Dorsolateral prefrontal cortex (tissue), 120 donors: ENCODE measurements at regions of chr1 and their contacts with region 1.

Region 1: DNA sequence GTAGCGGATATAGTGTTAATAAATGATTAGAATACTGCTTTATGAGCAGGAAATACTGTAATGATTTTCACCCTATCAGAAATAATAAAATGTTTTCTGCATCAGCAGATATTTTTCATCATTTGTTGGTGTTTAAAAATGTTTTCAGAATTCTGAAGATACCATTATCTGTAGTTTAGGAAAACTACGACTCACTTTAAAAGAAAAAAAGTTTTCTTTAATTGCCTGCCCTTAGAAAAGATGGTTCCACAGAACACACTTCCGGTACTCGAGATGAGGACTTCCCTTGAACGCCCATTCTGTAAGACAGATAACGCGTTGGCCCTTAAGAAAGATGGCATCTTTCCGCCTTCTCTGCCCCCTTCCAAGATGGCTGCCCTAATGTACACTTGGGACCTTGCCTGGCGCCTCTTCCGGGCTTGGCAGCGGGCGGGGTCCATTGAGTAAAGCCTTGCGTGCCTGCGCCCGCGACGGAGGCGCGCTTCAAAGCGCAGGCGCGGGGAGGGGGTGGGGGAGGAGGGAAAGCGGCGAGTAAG is at the start of gene SZRD1:
- DNase-seq: peak; percentile 92 to 99 (median 96)
- H3K4me3 ChIP-seq: peak within 1 kb of the TSS; percentile 52 to 98 (median 90)
- H3K27ac ChIP-seq: peak within 1 kb of the TSS; percentile 80 to 100 (median 99)
- H3K27me3 ChIP-seq: no peaks in the 10 kb centered on the region
- CTCF ChIP-seq: peak in 4 of 56 donors; percentile 4 to 35 (median 9)
- total RNA-seq, gene SZRD1: 33.3 to 89.5 (median 49.3) TPM

Region 2: GRCh38 chr1:16078925-16079656 is 287.7 kb before region 1 on chr1:
- intact Hi-C with region 1: loop called (anchors 2 to 5 kb)
- DNase-seq: peak; percentile 67 to 85 (median 82)
- H3K4me3 ChIP-seq: peak overlapping the region in 7 of 59 donors; percentile 12 to 39 (median 31)
- H3K27ac ChIP-seq: peak overlapping the region in 6 of 59 donors; percentile 14 to 50 (median 36)
- H3K27me3 ChIP-seq: no peaks in the 10 kb centered on the region
- CTCF ChIP-seq: peak; percentile 70 to 97 (median 92)

Region 3: DNA sequence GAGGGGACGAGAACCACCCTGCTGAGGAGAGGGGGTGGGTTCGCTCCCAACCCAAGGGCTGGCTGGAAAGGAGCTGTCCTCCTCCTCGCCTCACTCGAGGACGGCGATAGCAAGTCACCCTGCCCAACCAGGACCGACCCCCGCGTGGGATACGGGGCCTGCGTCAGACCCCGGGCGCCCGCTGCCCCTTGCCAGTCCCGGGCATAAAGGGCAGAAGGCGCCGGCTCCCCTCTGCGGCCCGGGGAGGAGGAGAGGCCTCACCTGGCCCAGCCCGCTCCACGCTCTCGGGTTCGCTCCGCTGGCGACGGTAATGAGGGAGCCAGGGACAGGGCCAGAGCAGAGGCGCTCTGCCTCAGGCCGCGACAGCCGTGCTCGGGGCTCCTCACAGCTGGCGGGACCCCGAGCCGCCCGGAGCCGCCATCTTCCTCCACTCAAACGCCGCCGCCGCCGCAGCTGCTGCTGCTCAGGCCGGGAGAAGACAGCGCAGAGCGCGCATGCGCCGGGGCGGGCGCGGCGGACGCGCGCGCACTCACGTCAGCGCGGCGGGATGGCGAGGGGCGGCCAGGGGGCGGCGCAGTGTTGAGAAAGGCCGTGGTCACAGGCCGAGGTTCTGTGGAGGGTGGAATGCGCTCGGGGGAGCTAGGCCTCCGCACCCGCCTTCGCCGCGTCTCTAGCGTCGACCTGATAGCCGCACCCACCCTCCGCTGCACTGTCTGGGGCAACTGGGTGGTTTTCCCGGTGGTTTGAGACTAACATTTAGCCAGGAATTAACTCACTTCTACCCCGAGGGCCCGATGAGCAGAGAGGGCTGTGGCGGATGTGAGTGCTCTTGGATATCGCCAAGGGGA is 14.6 kb before region 1 on chr1 and contains the start of gene FBXO42:
- intact Hi-C with region 1: loop called (anchors 1 to 2 kb)
- DNase-seq: peak; percentile 73 to 94 (median 86)
- H3K4me3 ChIP-seq: peak within 1 kb of the TSS; percentile 62 to 100 (median 95)
- H3K27ac ChIP-seq: peak within 1 kb of the TSS; percentile 60 to 98 (median 91)
- H3K27me3 ChIP-seq: no peaks in the 10 kb centered on the region
- CTCF ChIP-seq: peak in 55 of 56 donors; percentile 24 to 80 (median 61)
- total RNA-seq, gene FBXO42: 19.4 to 43.5 (median 31.1) TPM

Region 4: DNA sequence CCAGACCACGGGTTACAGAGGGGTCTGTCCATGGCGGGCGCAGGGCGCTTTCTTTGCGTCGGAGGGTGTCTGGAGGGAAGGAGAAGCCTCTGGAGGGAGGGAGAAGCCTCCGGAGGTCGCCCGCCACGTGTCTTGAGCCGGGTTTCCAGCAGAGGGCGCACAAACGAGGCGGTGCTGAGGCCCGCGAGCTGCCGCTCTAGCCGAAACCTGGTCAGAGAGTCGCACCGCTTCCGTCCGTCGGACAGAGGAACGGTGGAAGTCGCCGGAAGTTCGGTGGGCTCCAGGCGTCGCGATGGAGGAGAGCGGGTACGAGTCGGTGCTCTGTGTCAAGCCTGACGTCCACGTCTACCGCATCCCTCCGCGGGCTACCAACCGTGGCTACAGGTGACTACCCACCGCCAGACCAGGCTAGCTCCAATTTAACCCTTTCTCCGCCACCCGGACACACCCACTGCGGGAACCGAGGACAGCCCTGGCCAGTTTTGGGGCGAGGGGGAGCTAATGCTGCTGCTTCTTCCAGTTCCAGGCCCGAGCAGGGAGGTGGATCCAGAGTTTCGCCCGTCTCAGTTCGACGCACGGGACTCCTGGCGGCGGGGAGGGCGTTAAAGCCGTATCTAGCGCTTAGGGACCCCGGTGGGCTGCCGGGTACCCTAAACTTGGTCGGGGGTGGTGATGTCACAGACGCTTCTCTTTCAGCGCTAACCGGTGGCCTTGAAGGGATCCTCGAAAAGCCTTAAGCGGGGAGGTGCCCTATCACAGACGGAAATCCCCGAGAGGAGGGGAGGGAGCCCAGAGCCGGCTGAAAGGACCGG is 73.9 kb after region 1 on chr1 and contains the start of gene NECAP2:
- intact Hi-C with region 1: loop called in 1 of 2 experiments (anchors 5 kb)
- DNase-seq: peak; percentile 85 to 96 (median 92)
- H3K4me3 ChIP-seq: peak within 1 kb of the TSS; percentile 66 to 99 (median 92)
- H3K27ac ChIP-seq: peak within 1 kb of the TSS; percentile 38 to 97 (median 80)
- H3K27me3 ChIP-seq: no peaks in the 10 kb centered on the region
- CTCF ChIP-seq: peak; percentile 68 to 99 (median 95)
- total RNA-seq, gene NECAP2: 14.6 to 37.1 (median 23.5) TPM

Region 5: GRCh38 chr1:16498573-16499413 is 132.0 kb after region 1 on chr1:
- intact Hi-C with region 1: loop called in 1 of 2 experiments (anchors 5 kb)
- DNase-seq: peak; percentile 73 to 91 (median 86)
- H3K4me3 ChIP-seq: peak overlapping the region; percentile 59 to 94 (median 83)
- H3K27ac ChIP-seq: peak overlapping the region; percentile 66 to 98 (median 92)
- H3K27me3 ChIP-seq: no peaks in the 10 kb centered on the region
- CTCF ChIP-seq: peak in 33 of 56 donors; percentile 7 to 63 (median 24)